ENCODE measurements at regions of chr12 and their contacts with region 1.

Region 1: DNA sequence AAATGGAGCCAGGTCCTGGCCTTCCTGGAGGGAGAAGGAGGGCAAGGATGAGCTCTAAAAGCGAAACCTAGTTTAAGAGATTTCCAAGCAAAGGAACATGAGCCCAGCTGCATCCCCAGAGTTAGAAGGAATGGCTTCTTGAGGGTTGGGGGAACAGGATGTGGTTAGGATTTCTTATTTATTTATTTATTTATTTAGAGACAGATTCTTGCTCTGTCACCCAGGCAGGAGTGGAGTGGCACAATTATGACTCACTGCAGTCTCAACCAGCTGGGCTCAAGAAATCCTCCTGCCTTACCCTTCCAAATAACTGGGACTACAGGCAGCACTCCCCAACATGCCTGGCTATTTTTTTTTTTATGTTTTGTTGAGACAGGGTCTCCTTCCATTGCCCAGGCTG is 25.3 kb upstream of the TMEM106C start:
- DNase-seq: no peak
- H3K4me3 ChIP-seq: no peak overlapping the region
- H3K4me3 Mint-ChIP-seq: no peak overlapping the region
- H3K27ac ChIP-seq: no peak overlapping the region
- H3K27ac Mint-ChIP-seq: no peak overlapping the region
- H3K4me1 ChIP-seq: no peaks in the 10 kb centered on the region
- H3K4me1 Mint-ChIP-seq: peaks cover 0 to 9% (median 7%) of the 10 kb centered on the region in 3 donors
- H3K27me3 ChIP-seq: no peaks in the 10 kb centered on the region
- H3K27me3 Mint-ChIP-seq: peaks cover 12 to 18% of the 10 kb centered on the region in 2 donors

Region 2: GRCh38 chr12:47949441-47950308 is 11.6 kb after region 1 on chr12:
- CTCF ChIA-PET with region 1: interaction called, 10 read pairs
- POLR2A ChIA-PET with region 1: no interaction called
- DNase-seq: peak; percentile 10 to 52 (median 29)
- H3K4me3 ChIP-seq: no peak overlapping the region
- H3K4me3 Mint-ChIP-seq: no peak overlapping the region
- H3K27ac ChIP-seq: no peak overlapping the region
- H3K27ac Mint-ChIP-seq: peak overlapping the region in 1 of 8 donors; percentile 52
- H3K4me1 ChIP-seq: no peaks in the 10 kb centered on the region
- H3K4me1 Mint-ChIP-seq: no peaks in the 10 kb centered on the region
- H3K27me3 ChIP-seq: no peaks in the 10 kb centered on the region
- H3K27me3 Mint-ChIP-seq: peaks cover 12 to 21% of the 10 kb centered on the region in 2 donors

Region 3: GRCh38 chr12:48021485-48022179 is 83.5 kb after region 1 on chr12:
- CTCF ChIA-PET with region 1: no interaction called
- POLR2A ChIA-PET with region 1: no interaction called
- DNase-seq: no peak
- H3K4me3 ChIP-seq: no peak overlapping the region
- H3K4me3 Mint-ChIP-seq: no peak overlapping the region
- H3K27ac ChIP-seq: no peak overlapping the region
- H3K27ac Mint-ChIP-seq: no peak overlapping the region
- H3K4me1 ChIP-seq: no peaks in the 10 kb centered on the region
- H3K4me1 Mint-ChIP-seq: no peaks in the 10 kb centered on the region
- H3K27me3 ChIP-seq: no peaks in the 10 kb centered on the region
- H3K27me3 Mint-ChIP-seq: peaks cover 18 to 55% of the 10 kb centered on the region in 2 donors